ENCODE measurements at regions of chr10 and their contacts with region 1.

Region 1: DNA sequence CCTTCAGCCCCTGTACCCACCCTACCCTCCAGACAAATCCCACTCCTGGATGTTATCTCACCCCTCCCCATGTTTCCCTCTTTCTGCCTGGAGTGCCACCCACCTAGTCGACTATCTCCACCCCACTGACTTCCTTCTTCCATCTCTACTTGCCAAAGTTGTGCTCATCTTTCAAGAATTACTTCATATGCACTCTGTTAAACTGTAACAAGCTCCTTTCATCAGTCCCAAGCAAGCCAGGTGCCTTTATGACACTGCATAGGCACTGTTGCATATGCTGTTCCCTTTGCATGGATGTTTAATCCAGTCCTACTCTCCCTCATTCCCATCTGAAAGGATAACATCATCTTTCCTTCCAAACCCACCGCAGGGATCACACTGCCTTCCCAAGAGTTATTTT is 8.9 kb upstream of the CDK1 start:
- DNase-seq: no peak
- H3K4me3 Mint-ChIP-seq: no peak overlapping the region
- H3K27ac Mint-ChIP-seq: no peak overlapping the region
- H3K4me1 Mint-ChIP-seq: peaks cover 10% of the 10 kb centered on the region
- H3K27me3 Mint-ChIP-seq: peaks cover 7% of the 10 kb centered on the region

Region 2: GRCh38 chr10:60099998-60100747 is 669.2 kb before region 1 on chr10:
- intact Hi-C with region 1: loop called (anchors 5 kb)
- DNase-seq: no peak
- H3K4me3 Mint-ChIP-seq: no peak overlapping the region
- H3K27ac Mint-ChIP-seq: no peak overlapping the region
- H3K4me1 Mint-ChIP-seq: no peaks in the 10 kb centered on the region
- H3K27me3 Mint-ChIP-seq: no peaks in the 10 kb centered on the region

Region 3: GRCh38 chr10:60114765-60115586 is 654.4 kb before region 1 on chr10:
- intact Hi-C with region 1: loop called (anchors 5 kb)
- DNase-seq: no peak
- H3K4me3 Mint-ChIP-seq: no peak overlapping the region
- H3K27ac Mint-ChIP-seq: no peak overlapping the region
- H3K4me1 Mint-ChIP-seq: no peaks in the 10 kb centered on the region
- H3K27me3 Mint-ChIP-seq: no peaks in the 10 kb centered on the region

Region 4: DNA sequence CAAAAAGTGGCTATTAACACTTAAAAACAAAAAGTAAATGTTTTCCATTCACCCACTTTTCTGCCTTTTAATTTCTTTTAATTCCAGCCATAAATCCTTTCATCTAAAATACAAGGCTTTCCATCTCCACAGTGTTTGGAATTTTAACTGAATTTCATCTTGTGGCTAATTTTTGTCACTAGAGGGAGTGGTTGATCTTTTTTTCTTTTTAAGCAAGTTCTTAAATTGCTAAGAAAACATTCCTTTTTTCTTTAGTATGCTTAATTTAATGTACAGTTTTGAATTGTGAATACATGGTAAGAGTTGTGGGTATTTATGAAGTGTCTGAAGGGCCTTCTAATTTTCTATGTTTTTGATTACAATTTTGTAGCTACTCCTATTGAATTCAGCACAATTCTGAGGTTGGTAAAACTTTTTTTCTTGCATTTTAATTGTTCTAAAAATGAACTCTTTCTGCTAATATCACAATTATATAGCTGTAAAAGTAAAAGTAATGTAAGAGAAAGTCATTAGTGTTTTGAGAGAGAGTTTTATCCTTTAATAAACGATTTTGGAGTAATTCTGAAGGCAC is 324.8 kb before region 1 on chr10:
- intact Hi-C with region 1: loop called (anchors 5 kb)
- DNase-seq: no peak
- H3K4me3 Mint-ChIP-seq: no peak overlapping the region
- H3K27ac Mint-ChIP-seq: no peak overlapping the region
- H3K4me1 Mint-ChIP-seq: peaks cover 5% of the 10 kb centered on the region
- H3K27me3 Mint-ChIP-seq: no peaks in the 10 kb centered on the region

Region 5: GRCh38 chr10:60549686-60550085 is 219.7 kb before region 1 on chr10:
- intact Hi-C with region 1: loop called (anchors 5 kb)
- DNase-seq: no peak
- H3K4me3 Mint-ChIP-seq: no peak overlapping the region
- H3K27ac Mint-ChIP-seq: no peak overlapping the region
- H3K4me1 Mint-ChIP-seq: no peaks in the 10 kb centered on the region
- H3K27me3 Mint-ChIP-seq: no peaks in the 10 kb centered on the region

Region 6: DNA sequence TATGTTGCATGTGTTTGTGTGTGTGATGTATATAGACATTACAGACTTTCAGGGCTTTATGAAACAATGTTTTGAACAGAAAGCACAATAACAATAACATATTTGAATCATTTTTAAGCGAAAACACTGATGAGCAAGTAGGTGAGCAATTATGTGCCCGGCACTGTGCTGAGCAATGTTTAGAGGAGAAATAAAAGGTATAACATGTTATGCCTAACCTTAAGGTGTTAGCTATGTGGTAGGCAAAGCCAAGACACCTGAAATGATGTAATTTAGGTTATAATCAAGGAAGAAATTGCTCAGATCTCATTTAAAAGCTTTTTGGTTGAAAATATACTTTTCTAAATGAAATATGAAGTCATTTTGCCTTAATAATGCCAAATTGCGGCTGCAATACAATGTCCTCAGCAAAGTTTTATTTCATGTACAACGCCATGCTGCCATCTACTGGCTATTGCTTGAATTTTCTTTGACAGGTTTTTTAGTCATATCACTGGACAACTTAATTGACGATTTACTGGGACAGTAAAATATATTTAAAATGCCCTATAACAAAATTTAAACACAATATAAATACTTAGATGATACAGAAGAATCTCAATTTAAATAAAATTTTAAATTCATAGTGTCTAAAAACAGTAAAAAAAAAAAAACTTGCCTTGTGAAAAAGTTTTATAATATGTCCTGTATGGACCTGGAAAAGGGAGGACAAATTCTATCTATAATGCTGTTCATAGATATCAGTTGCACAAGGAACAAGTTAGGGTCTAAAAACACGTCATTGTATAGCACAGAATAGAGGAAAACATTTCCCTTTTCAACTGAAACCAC is 122.2 kb before region 1 on chr10:
- intact Hi-C with region 1: loop called (anchors 5 kb)
- DNase-seq: no peak
- H3K4me3 Mint-ChIP-seq: no peak overlapping the region
- H3K27ac Mint-ChIP-seq: no peak overlapping the region
- H3K4me1 Mint-ChIP-seq: peaks cover 8% of the 10 kb centered on the region
- H3K27me3 Mint-ChIP-seq: no peaks in the 10 kb centered on the region